Mammary epithelial cell (primary cell): ENCODE measurements at regions of chr17 and their contacts with region 1.

Region 1: GRCh38 chr17:78679495-78680390 is 102.3 kb downstream of the CYTH1 start:
- DNase-seq: no peak
- H3K4me3 ChIP-seq: no peak overlapping the region
- H3K27ac ChIP-seq: no peak overlapping the region
- H3K4me1 ChIP-seq: peaks cover 16% of the 10 kb centered on the region
- H3K27me3 ChIP-seq: no peaks in the 10 kb centered on the region
- CTCF ChIP-seq: no peak

Region 2: DNA sequence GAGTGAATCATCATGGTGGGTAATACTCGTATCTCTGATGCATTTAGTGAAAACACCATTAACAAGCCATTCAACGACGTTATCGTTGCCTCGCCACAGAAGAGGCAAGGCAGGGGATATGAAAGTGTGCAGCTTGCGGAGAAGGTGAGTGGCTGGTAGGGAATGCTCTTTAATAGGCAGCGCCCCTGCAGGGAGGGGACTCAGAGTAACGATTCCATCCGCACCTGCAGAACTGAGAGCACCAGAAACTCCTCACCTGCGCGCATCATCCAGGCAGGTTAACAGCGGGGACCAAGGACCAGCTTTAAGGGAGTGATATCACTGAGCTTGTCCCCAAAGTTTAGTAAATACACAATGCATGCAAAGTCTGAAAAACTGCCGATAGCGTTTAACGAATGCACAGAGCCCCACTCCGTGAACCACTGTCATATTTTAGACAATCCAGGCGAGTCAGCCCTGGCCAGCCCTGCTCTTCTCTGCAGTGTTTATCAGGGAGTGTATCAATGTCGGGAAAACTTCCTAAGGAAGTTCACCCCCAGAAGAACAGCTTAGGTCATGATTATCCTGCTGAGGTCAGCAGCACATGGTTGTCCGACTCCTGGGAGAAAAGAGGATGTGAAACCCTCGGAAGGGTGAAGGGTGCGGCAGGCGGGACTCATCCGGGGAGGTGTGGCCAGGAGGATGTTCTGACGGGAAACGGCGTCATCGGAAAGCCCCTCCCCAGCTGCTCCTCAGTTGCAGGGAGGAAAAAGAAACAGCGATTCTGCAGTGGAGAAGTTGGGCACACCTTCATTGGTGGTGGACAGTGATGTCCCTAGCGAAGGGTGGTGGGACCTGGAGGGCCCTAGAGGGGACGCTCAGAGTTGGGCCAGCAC is 34.1 kb before region 1 on chr17:
- CTCF ChIA-PET with region 1: no interaction called
- dilution Hi-C with region 1: no loop called
- in situ Hi-C with region 1: no loop called
- intact Hi-C with region 1: no loop called
- DNase-seq: no peak
- H3K4me3 ChIP-seq: no peak overlapping the region
- H3K27ac ChIP-seq: no peak overlapping the region
- H3K4me1 ChIP-seq: no peaks in the 10 kb centered on the region
- H3K27me3 ChIP-seq: no peaks in the 10 kb centered on the region
- CTCF ChIP-seq: no peak

Region 3: GRCh38 chr17:78753316-78754249 is 73.8 kb after region 1 on chr17:
- CTCF ChIA-PET with region 1: no interaction called
- dilution Hi-C with region 1: loop called (anchors 5 kb)
- in situ Hi-C with region 1: no loop called
- intact Hi-C with region 1: no loop called
- DNase-seq: no peak
- H3K4me3 ChIP-seq: no peak overlapping the region
- H3K27ac ChIP-seq: no peak overlapping the region
- H3K4me1 ChIP-seq: peaks cover 10% of the 10 kb centered on the region
- H3K27me3 ChIP-seq: no peaks in the 10 kb centered on the region
- CTCF ChIP-seq: no peak